Psoas muscle (tissue), 8 donors: ENCODE measurements at regions of chr19 and their contacts with region 1.

Region 1: DNA sequence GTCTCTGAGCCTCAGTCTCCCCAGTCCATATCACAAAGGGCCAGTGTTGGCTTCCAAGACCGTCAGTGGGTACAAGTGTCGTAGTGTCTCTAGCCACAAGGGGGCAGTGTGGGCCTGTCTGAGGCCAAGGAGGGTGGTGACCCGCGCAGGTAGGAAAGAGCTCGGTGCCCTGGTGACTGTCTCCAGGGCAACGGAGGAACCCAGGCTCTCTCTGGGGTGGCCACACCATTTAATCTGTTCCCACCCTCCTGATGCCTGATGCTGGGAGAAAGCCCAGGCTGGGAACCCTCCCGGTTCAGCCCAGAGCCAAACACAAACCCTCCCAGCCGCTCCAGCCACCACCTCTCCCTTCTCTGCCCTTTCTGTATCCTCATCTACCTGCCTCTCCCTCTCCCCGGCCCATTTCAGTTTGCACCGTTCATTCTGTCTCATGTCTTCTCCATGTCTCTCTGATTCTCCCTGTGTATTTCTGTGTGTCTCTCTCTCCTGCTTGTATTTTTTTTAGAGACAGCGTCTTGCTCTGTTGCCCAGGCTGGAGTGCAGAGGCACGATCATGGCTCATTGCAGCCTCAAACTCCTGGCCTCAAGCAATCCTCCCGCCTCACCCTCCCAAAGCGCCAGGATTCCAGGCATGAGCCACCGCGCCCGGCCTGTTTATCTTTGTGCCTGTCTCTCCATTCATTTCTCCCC is 17.5 kb upstream of the MEIS3 start:
- DNase-seq: peak; percentile 77 to 87
- ATAC-seq: peak; percentile 91 to 100 (median 99)
- H3K4me3 ChIP-seq: no peak overlapping the region
- H3K27ac ChIP-seq: no peak overlapping the region
- H3K4me1 ChIP-seq: no peaks in the 10 kb centered on the region
- H3K27me3 ChIP-seq: peaks cover 0 to 57% (median under 1%) of the 10 kb centered on the region in 3 donors
- CTCF ChIP-seq: peak; percentile 90

Region 2: DNA sequence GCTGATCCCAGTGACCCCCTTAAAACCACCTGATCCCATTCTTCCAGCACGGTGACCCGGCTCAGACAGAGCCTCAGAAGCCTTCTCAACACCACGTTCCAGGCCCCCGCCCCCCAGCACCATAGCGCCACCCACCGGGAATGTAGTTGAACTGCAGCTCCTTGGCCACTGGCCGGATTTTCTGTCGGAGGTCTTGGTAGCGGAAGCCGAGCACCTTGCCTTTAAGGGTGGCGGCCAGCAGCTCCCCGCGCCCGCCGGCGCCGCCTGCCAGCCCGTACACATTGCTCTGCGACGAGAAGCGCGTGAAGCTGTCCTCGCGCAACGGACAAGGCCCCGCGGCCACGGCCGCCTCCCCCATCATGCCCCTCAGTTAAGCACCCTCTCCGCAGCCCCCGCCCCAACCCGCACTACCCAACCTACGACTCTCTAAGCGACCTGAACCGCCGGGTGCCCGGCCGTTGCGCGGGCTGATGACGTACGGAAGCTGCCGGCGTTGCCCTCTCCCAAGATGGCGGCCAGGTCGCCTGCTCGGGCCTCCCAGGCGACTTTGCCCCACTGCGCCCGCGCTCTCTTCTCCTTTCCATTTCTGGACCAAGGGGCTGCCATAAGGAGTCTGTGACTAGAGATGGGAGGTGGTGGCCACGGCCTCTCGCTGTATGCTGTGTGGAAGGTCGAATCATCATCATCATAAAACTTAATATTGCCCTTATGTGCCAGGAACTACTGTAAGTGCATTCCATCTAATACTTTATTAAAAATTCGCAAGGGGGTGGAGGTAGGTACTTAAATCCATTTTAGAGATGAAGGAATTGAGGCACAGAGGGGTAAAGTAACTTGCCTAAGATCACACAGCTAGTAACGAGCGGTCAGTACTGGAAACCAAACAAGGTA is 47.2 kb after region 1 on chr19 and contains the start of gene KPTN:
- intact Hi-C with region 1: loop called in 1 of 2 experiments (anchors 5 kb)
- DNase-seq: peak; percentile 91 to 95
- ATAC-seq: peak; percentile 89 to 94 (median 92)
- H3K4me3 ChIP-seq: peak within 1 kb of the TSS; percentile 66
- H3K27ac ChIP-seq: peak within 1 kb of the TSS; percentile 92
- H3K4me1 ChIP-seq: peaks cover 7% of the 10 kb centered on the region
- H3K27me3 ChIP-seq: no peaks in the 10 kb centered on the region
- CTCF ChIP-seq: peak; percentile 78
- total RNA-seq, gene KPTN: 5.9 to 11.2 (median 8.1) TPM

Region 3: GRCh38 chr19:47573071-47574026 is 136.5 kb after region 1 on chr19 and contains the start of gene ZNF541:
- intact Hi-C with region 1: no loop called
- DNase-seq: peak; percentile 72
- ATAC-seq: peak in 3 of 4 donors; percentile 44 to 57 (median 52)
- H3K4me3 ChIP-seq: peak within 1 kb of the TSS; percentile 58
- H3K27ac ChIP-seq: no peak within 1 kb of the TSS
- H3K4me1 ChIP-seq: no peaks in the 10 kb centered on the region
- H3K27me3 ChIP-seq: peaks cover 3 to 20% (median 5%) of the 10 kb centered on the region in 3 donors
- CTCF ChIP-seq: no peak
- total RNA-seq, gene ZNF541: 0.13 to 0.73 (median 0.32) TPM

Region 4: GRCh38 chr19:47707135-47707925 is 270.5 kb after region 1 on chr19:
- intact Hi-C with region 1: loop called in 1 of 2 experiments (anchors 1 kb)
- DNase-seq: peak; percentile 76 to 84
- ATAC-seq: peak; percentile 74 to 88 (median 85)
- H3K4me3 ChIP-seq: no peak overlapping the region
- H3K27ac ChIP-seq: no peak overlapping the region
- H3K4me1 ChIP-seq: no peaks in the 10 kb centered on the region
- H3K27me3 ChIP-seq: peaks cover 0 to 7% (median 0%) of the 10 kb centered on the region in 3 donors
- CTCF ChIP-seq: peak; percentile 67